Psoas muscle (tissue), 8 donors: ENCODE measurements at regions of chr17 and their contacts with region 1.

Region 1: GRCh38 chr17:8248751-8249607 is at the start of gene PFAS:
- DNase-seq: peak; percentile 97 to 98
- ATAC-seq: peak; percentile 84 to 89 (median 85)
- H3K4me3 ChIP-seq: peak within 1 kb of the TSS; percentile 88
- H3K27ac ChIP-seq: peak within 1 kb of the TSS; percentile 98
- H3K4me1 ChIP-seq: peaks cover 8% of the 10 kb centered on the region
- H3K27me3 ChIP-seq: no peaks in the 10 kb centered on the region
- CTCF ChIP-seq: no peak
- total RNA-seq, gene PFAS: 10.7 to 15.6 (median 13.3) TPM

Region 2: GRCh38 chr17:8189711-8190477 is 59.1 kb before region 1 on chr17 and contains the start of gene BORCS6:
- intact Hi-C with region 1: loop called (anchors 1 to 2 kb)
- DNase-seq: peak; percentile 97 to 99
- ATAC-seq: peak; percentile 72 to 75 (median 74)
- H3K4me3 ChIP-seq: peak within 1 kb of the TSS; percentile 93
- H3K27ac ChIP-seq: peak within 1 kb of the TSS; percentile 96
- H3K4me1 ChIP-seq: peaks cover 22% of the 10 kb centered on the region
- H3K27me3 ChIP-seq: no peaks in the 10 kb centered on the region
- CTCF ChIP-seq: no peak
- total RNA-seq, gene BORCS6: 8.8 to 11.2 (median 9.7) TPM

Region 3: DNA sequence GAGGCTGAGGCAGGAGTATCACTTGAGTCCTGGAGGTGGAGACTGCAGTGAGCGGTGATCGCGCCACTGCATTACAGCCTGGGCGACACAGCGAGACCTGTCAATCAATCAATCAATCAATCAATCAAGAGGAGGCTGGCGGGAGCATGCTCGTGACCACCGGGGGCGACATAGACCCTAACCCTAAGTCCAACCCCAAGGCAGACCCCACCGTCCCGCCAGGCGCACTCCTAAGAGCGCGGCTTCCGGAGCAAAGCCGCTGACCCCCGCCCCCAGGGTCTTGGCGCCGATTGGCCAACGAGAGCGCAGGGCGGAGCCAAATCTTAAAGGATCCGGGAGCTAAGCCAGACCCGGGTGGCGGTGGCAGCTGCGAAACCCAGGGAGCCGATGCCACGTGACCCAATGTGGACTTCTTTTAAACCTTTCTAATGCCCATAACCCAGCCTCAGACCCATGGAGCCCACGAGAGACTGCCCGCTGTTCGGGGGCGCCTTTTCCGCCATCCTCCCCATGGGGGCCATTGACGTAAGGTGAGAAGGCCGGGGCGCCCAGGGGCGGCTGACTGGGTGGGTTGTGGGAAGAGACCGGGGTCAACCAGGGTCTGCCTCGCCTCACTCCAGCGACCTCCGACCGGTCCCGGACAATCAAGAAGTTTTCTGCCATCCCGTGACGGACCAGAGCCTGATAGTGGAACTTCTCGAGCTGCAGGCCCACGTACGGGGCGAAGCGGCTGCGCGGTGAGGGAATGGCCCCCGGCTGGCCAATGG is 39.5 kb after region 1 on chr17 and contains the start of gene RANGRF:
- intact Hi-C with region 1: loop called (anchors 2 to 5 kb)
- DNase-seq: peak; percentile 90 to 94
- ATAC-seq: peak; percentile 90 to 97 (median 92)
- H3K4me3 ChIP-seq: peak within 1 kb of the TSS; percentile 78
- H3K27ac ChIP-seq: peak within 1 kb of the TSS; percentile 90
- H3K4me1 ChIP-seq: peaks cover 19% of the 10 kb centered on the region
- H3K27me3 ChIP-seq: no peaks in the 10 kb centered on the region
- CTCF ChIP-seq: no peak
- total RNA-seq, gene RANGRF: 9.0 to 16.3 (median 11.7) TPM

Region 4: DNA sequence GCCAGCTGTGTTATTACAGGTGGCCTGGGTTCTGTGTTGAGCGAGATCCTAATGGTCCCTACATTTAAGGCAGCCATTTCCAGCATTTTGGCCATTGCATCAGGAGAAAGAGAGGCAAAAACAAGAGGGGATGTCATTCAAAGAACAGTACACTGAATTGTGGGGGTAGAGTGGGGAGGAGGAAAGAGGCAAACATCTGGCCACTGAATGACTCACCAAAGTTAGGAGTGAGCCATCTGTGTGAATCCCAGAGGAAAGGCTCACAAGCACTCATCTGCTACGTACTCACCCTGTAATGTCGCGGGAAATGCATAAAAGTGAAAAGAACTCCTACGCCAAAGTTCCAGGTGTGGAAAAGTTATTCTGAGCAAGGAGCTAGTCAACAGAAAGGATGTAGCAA is 110.8 kb after region 1 on chr17:
- intact Hi-C with region 1: loop called in 1 of 2 experiments (anchors 10 kb)
- DNase-seq: no peak
- ATAC-seq: peak; percentile 27 to 74 (median 63)
- H3K4me3 ChIP-seq: no peak overlapping the region
- H3K27ac ChIP-seq: peak overlapping the region; percentile 58
- H3K4me1 ChIP-seq: peaks cover 30% of the 10 kb centered on the region
- H3K27me3 ChIP-seq: no peaks in the 10 kb centered on the region
- CTCF ChIP-seq: no peak